Astrocyte of the cerebellum (primary cell): ENCODE measurements at regions of chr19 and their contacts with region 1.

Region 1: DNA sequence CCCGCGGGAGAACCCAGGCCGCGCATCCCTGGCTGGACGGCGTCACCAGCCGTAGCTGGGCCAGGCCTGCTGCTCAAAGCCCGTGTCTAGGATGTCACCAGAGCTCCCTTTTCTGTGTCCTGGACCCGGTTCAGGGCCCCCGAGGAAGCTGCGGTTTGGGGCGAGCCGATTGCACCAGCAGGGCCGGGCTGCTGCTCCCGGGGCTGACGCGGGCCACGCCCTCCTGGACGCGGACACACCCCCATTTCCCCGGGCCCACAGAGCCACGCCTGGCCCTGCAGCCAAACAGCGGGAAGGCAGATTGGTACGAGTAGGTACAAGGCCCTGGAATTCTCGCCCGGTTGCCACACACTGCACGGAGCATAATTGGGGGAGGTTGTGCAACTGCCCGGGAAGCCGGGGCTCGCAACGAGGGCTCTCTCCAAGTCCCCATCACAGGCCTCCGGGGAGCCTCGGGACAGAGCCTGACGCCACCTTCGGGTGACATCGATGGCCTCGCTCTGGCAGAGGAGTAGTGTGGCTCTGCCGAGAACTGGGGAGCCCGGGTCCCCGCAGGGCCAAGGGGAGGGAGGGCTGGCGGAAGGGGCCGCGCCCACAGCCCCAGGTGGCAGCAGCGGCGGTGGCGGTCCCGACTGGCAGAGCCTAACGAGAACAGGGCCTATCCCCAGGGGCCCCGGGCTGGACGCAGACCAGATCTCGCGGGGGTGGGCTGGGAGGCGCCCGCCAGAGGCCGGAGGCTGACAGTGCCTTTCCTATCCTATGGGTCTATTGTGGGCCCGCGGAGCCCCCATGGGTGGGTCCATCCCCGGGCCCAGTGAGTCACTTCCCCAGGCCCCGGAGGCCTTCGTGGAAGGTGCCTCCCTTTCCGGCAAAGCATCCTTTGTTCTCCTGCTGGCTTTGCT is 23.5 kb downstream of the KCTD15 start:
- DNase-seq: no peak
- H3K4me3 ChIP-seq: peak overlapping the region; percentile 10
- CTCF ChIP-seq: no peak

Region 2: DNA sequence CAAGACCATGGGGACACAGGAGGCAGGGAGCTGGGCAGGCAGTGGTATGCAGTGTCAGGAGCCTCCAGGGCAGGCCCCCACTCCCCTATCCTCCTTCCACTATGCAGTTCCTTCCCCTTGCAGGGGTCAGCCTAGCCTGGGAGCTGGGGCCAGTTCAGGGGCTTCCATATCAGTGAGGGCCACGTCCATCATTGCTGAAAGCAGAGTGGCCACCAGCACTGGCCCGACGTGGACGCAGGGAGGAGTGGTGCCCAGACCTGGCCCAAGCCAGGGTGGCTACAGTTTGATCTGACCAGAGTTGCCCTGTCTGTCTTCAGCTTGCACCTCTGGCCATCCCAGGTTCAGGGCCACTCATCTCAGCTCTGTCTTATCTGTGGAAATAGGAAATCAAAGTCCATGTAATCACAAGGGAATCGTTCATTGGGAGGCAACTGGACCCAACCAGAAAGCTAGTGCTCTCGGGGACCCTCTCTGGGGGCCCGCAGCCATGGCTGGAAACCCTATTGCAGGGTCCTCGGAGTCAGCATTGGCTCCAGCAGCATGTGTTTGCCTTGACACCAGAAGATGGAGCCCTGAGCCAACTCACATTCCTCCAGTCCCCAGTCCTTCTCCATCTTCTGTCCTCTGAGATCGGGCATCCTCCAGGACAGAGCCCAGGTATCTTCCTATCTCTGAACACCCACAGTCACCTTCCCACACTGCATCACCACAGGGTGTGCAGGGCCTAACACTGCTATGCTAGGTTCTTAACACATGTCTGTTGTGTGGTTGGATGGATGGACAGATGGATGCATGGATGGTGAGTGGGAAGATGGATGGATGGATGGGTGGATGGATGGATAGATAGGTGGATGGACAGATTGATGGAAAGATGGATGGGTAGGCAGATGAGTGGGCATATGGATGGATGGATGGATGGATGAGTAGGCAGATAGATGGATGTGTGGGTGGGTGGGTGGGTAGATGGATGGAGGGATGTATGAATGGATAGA is 99.1 kb before region 1 on chr19:
- in situ Hi-C with region 1: loop called (anchors 5 kb)
- DNase-seq: no peak
- H3K4me3 ChIP-seq: no peak overlapping the region
- CTCF ChIP-seq: no peak

Region 3: DNA sequence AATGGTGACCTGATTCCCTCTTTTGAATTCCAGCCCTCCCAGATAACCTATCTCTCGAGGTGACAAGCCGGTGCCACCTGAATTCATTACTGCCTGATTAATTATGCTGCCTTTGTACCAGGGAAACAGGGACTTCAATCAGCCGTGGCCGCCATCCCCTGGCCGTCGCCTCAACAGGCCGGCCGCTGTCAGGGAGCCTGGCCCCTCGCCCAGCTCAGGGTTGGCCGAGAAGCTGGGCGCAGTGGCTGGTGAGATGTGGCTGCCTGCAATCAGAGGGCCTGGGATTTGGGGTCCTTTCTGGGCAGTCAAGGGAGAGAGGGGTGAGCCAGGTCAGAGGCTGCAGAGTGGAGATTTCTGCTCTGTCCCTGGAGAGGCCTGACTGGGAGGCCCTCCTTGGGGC is 67.8 kb after region 1 on chr19:
- in situ Hi-C with region 1: no loop called
- DNase-seq: no peak
- H3K4me3 ChIP-seq: no peak overlapping the region
- CTCF ChIP-seq: no peak

Region 4: DNA sequence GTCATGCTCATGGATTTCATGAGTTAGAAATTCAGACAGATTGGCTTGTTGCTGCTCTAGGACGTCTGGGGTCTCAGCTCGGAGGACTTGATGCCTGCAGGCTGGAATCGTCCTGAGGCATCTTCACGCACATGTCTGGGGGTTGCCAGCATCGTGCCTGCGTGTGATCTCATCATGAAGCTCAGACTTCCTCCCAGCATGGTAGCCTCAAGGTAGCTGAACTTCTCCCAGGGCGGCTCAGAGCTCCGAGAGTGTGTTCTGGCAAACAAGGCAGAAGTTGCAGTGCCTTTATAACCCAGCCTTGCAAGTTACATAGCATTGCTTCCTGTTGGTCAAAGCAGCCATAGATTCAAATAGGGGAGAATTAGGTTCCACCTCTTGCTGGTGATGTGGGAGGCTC is 88.5 kb after region 1 on chr19:
- in situ Hi-C with region 1: no loop called
- DNase-seq: no peak
- H3K4me3 ChIP-seq: no peak overlapping the region
- CTCF ChIP-seq: no peak